Activated CD8-positive, alpha-beta T cell treated with anti-CD3 and anti-CD28 coated beads for 36 hours (primary cell): ENCODE measurements at regions of chr17 and their contacts with region 1.

Region 1: GRCh38 chr17:8941520-8941919 is 24.0 kb downstream of the PIK3R5 start:
- DNase-seq: peak; percentile 89
- ATAC-seq: peak; percentile 41
- H3K4me3 Mint-ChIP-seq: peak overlapping the region; percentile 67
- H3K27ac Mint-ChIP-seq: peak overlapping the region; percentile 96
- H3K4me1 Mint-ChIP-seq: peaks cover 87% of the 10 kb centered on the region
- H3K27me3 Mint-ChIP-seq: no peaks in the 10 kb centered on the region
- CTCF ChIP-seq: no peak

Region 2: GRCh38 chr17:8954339-8954738 is 12.8 kb after region 1 on chr17:
- CTCF ChIA-PET with region 1: interaction called, 40 read pairs
- POLR2A ChIA-PET with region 1: interaction called, 333 read pairs
- intact Hi-C with region 1: no loop called
- DNase-seq: peak; percentile 87
- ATAC-seq: peak; percentile 79
- H3K4me3 Mint-ChIP-seq: peak overlapping the region; percentile 8
- H3K27ac Mint-ChIP-seq: peak overlapping the region; percentile 87
- H3K4me1 Mint-ChIP-seq: peaks cover 95% of the 10 kb centered on the region
- H3K27me3 Mint-ChIP-seq: no peaks in the 10 kb centered on the region
- CTCF ChIP-seq: no peak